ENCODE measurements at regions of chr17 and their contacts with region 1.

Region 1: DNA sequence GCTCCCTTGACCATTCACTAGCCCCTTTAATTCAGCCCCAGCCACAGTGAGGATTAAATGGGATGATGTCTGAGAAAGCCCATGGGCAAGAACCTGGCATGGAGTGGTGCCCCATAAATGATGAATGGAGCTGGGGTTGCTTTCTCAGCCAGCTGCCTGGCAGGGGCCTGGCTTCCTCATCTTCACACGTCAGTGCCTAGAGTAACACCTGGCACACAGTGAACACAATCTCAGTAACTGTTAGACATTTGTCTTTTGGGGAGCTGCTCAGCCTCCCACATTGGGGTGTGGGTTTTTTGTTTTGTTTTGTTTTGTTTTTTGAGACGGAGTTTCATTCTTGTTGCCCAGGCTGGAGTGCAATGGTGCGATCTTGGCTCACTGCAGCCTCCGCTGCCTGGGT is 47.5 kb upstream of the MEOX1 start:
- DNase-seq: no peak
- ATAC-seq: no peak
- H3K4me3 ChIP-seq: no peak overlapping the region
- H3K27ac ChIP-seq: no peak overlapping the region
- H3K4me1 ChIP-seq: peaks cover 3% of the 10 kb centered on the region
- H3K27me3 ChIP-seq: peaks cover 22% of the 10 kb centered on the region
- CTCF ChIP-seq: no peak
- POLR2A ChIP-seq: no peak
- RAD21 ChIP-seq: no peak

Region 2: DNA sequence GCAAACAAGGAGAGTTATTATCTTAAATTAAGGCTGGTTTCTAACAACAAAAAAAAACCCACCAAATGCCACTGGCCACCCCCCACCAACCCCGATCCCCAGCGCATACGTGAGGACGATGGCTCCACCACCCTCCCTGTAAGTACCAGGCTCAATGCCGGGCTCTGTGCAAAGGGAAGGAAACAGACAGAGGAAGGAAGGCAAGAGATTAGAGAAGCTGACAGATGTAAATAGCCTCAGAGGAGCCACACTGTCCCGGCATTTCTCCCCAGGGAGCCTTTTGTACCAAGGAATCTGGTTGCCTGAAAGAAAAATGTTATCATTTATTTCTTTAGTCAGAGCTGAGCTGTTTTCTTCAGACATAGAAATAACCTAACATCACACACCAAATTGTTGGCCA is 36.3 kb after region 1 on chr17:
- CTCF ChIA-PET with region 1: no interaction called
- POLR2A ChIA-PET with region 1: no interaction called
- dilution Hi-C with region 1: no loop called
- in situ Hi-C with region 1: loop called (anchors 5 kb)
- intact Hi-C with region 1: no loop called
- DNase-seq: no peak
- ATAC-seq: no peak
- H3K4me3 ChIP-seq: no peak overlapping the region
- H3K27ac ChIP-seq: no peak overlapping the region
- H3K4me1 ChIP-seq: peaks cover 11% of the 10 kb centered on the region
- H3K27me3 ChIP-seq: peaks cover 14% of the 10 kb centered on the region
- CTCF ChIP-seq: no peak
- POLR2A ChIP-seq: no peak
- RAD21 ChIP-seq: no peak